PC-9 (cell line): ENCODE measurements at regions of chr7 and their contacts with region 1.

Region 1: DNA sequence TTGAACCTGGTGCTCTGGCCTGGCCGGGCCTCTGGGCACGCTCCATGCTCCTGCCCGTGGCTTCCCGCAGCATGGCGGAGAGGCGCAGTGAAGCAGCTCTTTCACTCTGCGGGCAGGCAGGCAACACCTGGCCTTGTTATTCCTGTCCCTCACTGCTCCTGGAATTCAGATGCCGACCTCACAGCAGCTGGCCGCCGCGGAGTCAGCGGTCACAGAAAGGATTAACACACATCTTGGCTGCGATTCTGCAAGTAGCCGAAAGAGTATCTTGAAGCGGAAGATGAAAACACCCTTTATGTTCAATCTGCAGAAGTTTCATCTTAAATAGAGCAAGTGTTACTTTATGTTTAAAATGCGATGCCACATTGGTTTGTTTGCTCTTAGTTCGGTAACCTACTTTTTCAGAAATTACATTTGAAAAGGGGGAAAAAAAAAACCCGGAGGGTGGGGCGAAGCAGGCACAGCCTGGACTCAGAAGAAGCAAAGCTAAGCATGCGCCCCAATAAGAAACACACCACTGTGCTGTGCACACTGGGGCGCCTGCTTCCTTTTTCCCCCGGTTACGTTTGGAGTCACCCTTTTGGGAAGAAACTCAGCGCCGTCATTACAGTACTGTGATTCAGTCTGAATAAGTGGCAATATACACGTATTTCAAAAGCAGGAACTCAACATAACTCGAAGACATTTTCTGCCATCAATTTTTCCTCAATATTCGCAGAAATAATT is 42.3 kb downstream of the BRI3 start:
- DNase-seq: no peak
- H3K4me3 ChIP-seq: no peak overlapping the region
- H3K27ac ChIP-seq: no peak overlapping the region
- H3K4me1 ChIP-seq: no peaks in the 10 kb centered on the region
- H3K27me3 ChIP-seq: no peaks in the 10 kb centered on the region
- CTCF ChIP-seq: no peak

Region 2: GRCh38 chr7:98341106-98341505 is 17.3 kb after region 1 on chr7:
- CTCF ChIA-PET with region 1: no interaction called
- POLR2A ChIA-PET with region 1: no interaction called
- intact Hi-C with region 1: no loop called
- DNase-seq: no peak
- H3K4me3 ChIP-seq: no peak overlapping the region
- H3K27ac ChIP-seq: 0 out of 2 replicates have a peak overlapping the region, but pooled peaks have one; percentile 19
- H3K4me1 ChIP-seq: no peaks in the 10 kb centered on the region
- H3K27me3 ChIP-seq: no peaks in the 10 kb centered on the region
- CTCF ChIP-seq: no peak

Region 3: GRCh38 chr7:98360221-98361124 is 36.7 kb after region 1 on chr7:
- CTCF ChIA-PET with region 1: no interaction called
- POLR2A ChIA-PET with region 1: interaction called, 10 read pairs
- intact Hi-C with region 1: no loop called
- DNase-seq: peak; percentile 82 to 99
- H3K4me3 ChIP-seq: no peak overlapping the region
- H3K27ac ChIP-seq: peak overlapping the region; percentile 89
- H3K4me1 ChIP-seq: peaks cover 80% of the 10 kb centered on the region
- H3K27me3 ChIP-seq: no peaks in the 10 kb centered on the region
- CTCF ChIP-seq: no peak

Region 4: DNA sequence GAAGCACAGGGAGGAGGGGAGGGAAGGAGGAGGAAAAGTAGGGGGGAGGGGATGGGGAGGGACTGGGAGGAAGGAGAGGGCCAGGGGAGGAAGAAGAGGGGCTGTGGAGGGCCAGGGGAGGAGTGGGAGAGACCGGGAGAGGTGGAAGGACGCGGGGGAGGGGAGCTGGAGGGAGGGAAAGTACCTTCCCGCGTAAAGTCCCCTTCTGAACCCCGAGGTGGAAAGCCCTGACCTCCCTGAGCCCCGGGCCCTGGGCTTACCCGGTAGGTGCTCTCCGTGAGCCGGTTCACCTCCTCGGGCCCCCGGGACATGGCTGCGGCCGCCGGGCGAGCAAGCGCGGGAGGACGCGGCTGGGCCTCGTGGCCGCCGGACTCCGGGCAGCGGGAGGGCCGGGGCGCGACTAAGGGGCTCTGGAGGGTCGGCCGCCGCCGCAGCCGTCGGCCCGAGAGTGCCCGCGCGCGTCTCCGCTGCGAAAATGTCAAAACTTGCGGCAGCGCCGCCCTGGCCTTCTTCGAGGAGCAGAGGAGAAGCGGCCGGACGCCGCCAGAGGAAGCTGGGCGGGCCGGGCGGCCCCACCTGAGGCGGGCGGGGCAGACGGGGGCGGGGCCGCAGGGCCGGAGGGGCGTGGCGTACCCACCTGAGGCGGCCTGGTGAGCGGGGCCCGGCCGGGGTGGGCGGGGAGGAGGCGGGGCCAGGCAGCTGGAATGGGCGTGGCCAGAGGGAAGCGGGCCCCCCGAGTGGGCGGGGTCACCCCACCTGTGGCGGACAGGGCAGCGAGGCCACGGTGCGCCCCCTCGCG is 77.0 kb after region 1 on chr7 and contains the start of gene BAIAP2L1:
- CTCF ChIA-PET with region 1: no interaction called
- POLR2A ChIA-PET with region 1: no interaction called
- intact Hi-C with region 1: no loop called
- DNase-seq: peak; percentile 76 to 100
- H3K4me3 ChIP-seq: peak within 1 kb of the TSS; percentile 87
- H3K27ac ChIP-seq: peak within 1 kb of the TSS; percentile 85
- H3K4me1 ChIP-seq: peaks cover 29% of the 10 kb centered on the region
- H3K27me3 ChIP-seq: no peaks in the 10 kb centered on the region
- CTCF ChIP-seq: no peak
- total RNA-seq, gene BAIAP2L1: 89.4 and 102 TPM in 2 replicates

Region 5: DNA sequence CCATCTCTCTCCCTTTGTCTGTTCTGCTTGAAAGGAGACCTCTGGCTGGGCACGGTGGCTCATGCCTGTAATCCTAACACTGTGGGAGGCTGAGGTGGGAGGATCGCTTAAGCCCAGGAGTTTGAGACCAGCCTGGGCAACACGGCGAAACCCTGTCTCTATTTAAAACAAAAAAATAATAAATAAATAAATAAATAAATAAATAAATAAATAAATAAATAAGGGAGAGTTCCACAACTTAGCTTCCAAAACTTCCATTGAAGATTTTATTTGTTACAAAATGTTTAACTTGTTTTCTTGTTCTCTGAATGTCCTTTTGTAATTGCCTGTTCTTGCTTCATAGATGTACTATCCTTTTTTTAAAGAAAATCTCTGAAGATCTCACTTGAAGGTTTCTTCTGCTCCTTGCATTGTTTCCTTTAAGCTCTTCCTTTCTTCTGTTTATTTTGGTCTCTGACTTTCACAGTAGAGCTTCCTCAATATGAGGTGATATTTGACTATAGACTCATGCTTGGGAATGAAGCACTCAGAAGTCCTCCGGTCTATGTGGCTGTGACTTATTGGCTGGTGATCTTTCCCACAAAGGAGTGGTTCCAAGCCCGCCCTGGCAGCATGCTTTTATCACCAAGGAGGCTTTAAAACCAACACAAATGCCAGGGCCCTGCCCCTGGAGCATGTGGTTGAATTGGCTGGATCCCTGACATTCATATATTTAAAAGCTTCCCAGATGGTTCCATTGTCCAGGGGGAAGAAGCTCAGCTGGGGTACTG is 275.3 kb after region 1 on chr7:
- CTCF ChIA-PET with region 1: no interaction called
- POLR2A ChIA-PET with region 1: no interaction called
- intact Hi-C with region 1: no loop called
- DNase-seq: no peak
- H3K4me3 ChIP-seq: no peak overlapping the region
- H3K27ac ChIP-seq: no peak overlapping the region
- H3K4me1 ChIP-seq: no peaks in the 10 kb centered on the region
- H3K27me3 ChIP-seq: peaks cover 86% of the 10 kb centered on the region
- CTCF ChIP-seq: no peak